ENCODE measurements at regions of chr2 and their contacts with region 1.

Region 1: GRCh38 chr2:26846328-26847306 is 1.3 kb upstream of the DPYSL5 start:
- DNase-seq: peak; percentile 55 to 92 (median 85)

Region 2: DNA sequence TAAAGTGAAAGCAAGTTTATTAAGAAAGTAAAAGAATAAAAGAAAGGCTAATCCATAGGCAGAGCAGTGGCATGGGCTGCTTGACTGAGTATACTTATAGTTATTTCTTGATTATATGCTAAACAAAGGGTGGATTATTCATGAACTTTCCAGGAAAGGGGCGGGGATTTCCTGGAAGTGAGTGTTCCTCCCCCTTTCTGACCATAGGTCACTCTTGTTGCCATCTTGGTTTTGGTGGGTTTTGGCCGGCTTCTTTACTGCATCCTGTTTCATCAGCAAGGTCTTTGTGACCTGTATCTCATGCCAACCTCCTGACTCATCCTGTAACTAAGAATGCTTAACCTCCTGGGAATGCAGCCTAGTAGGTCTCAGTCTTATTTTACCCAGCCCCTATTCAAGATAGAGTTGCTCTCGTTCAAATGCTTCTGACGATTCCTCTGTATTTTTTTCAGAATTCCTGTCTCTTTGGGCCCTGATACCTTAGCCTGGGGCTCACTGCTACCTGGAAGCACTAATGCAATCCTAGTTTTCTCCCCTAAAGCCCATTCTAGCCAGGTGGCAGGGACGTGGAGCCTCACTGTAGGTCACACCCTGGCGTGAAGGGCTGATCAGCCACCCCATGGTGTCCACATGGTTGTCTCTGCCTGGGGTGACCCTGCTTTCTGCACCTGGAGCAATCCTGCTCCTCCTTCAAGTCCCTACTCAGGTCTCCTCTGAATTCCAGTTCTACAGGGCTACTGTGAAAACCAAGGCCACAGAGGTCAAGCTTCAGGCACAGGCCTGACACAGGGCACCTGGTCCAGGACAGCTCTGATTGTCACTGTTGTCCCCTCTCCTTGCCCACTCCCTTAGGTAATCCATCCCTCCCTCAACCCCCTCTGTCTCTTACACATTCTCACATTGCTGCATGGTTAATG is 88.5 kb before region 1 on chr2:
- intact Hi-C with region 1: no loop called
- DNase-seq: no peak

Region 3: GRCh38 chr2:26922405-26923188 is 76.0 kb after region 1 on chr2:
- intact Hi-C with region 1: loop called (anchors 5 kb)
- DNase-seq: peak; percentile 68 to 95 (median 86)

Region 4: DNA sequence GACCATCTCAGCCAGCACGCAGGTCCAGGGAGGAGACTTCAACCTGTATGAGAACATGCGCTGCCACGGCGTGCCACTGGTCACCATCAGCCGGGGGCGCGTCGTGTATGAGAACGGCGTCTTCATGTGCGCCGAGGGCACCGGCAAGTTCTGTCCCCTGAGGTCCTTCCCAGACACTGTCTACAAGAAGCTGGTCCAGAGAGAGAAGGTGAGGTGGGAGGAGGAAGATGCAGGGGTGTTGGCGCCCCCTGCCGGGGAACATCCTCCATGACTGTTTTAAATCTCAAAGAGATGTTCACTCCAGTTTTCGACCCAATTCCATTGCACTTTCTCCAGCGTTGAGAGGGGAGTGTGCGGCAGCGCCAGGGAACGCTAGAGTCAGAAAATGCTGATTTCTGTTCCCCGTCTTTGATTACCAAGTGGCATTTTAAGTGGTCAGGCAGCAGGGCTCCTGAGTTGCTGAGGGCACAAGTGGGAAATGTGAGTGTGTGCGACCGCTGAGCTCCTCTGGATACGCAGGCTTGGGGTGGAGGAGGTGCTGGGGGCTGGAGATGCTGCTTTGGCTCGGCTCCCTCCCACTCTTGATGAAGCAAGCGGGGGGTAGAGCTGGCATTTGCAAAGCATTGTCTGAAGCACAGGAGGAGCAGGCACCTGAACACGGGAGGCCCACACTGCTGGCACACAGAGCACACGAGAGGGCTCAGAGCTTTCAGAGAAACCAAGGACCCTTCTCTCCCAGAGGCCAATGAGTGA is 96.1 kb after region 1 on chr2:
- intact Hi-C with region 1: loop called (anchors 2 kb)
- DNase-seq: peak; percentile 67 to 91 (median 82)